Lower leg skin (tissue), 4 donors: ENCODE measurements at regions of chr1 and their contacts with region 1.

Region 1: GRCh38 chr1:110780600-110781484 is 92.1 kb upstream of the CD53 start:
- DNase-seq: peak; percentile 61 to 89
- H3K4me3 ChIP-seq: no peak overlapping the region
- CTCF ChIP-seq: no peak
- POLR2A ChIP-seq: no peak

Region 2: DNA sequence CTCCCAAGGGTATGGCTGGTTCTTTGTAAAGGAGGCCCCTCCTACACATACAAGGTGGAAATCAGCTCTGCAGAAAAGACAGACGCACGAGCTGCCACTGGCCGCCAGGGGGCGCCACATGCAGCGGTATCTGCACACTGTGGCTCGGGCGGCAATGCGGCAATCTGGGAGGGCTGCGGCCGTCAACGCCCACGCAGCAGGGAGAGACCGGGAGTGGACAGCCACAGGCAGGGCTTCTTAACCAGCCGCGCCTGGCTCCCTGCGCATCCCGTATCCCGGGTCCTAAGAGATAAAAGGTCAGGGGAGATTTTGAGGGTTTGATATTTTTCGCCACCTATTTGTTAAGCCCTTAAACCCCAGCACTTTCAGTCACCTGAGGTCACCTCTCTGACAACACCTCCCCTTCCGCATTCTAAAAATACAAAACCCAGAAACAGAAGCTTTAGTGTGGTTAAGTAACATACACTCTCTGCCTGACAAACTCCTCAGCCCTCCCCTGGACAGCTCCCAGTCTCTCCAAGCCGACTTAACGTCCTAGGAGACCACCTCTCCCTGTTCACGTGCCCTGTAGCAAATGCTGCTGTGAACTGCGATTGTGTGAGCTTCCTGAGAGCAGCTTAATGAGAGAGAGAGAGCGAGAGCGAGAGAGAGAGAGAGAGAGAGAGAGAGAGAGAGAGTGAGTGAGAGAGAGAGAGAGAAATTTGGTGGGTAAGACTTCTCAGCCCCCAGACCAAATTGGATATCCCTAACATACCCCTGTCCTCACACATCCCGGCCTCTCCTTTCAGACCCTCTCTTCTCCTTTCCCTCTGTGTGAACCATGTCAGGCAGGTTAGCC is 161.2 kb before region 1 on chr1:
- intact Hi-C with region 1: loop called (anchors 5 kb)
- DNase-seq: peak; percentile 59 to 95
- H3K4me3 ChIP-seq: no peak overlapping the region
- CTCF ChIP-seq: peak in 1 of 3 donors; percentile 33
- POLR2A ChIP-seq: no peak

Region 3: DNA sequence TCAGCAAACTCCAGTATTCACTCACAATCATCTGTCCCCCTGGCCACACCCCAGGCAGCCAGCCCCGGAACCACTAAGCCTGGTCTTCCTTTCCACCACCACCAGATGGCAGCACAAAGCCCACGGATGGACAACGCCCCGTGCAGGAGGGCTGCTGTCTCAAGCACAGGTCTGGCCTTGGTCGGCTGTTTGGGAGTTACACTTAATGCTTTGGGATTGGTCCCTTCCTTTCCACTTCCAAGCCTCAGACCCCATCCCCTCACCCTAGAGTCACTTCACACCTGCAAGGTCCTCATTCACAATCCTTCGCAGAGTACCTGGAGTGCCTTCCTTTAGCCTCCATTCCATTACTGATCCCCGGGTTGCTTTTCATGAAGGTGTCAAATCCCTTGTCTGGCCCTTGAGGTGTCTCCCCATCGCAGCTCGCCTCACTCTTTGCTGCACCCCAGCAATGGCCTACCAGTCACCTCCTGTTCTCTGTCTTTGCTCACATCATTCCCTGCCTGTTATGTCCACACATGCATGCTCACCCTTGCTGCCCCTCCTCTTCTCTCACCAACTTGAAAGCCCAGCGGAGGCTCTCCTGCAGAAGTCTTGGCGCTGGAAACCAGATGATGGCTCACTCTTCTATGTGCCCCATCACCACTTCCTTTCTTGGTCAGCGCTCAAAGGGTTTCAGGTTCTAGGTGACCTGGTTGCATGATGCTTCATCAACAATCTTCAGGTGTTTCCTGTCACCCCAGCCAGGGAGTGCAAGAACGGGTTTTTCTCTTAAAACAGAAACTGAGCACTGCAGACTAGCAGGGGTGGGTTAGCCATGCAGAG is 149.8 kb before region 1 on chr1:
- intact Hi-C with region 1: loop called (anchors 5 kb)
- DNase-seq: peak in 1 of 2 donors; percentile 93
- H3K4me3 ChIP-seq: no peak overlapping the region
- CTCF ChIP-seq: peak in 1 of 3 donors; percentile 20
- POLR2A ChIP-seq: no peak